ENCODE measurements at regions of chr12 and their contacts with region 1.

Region 1: GRCh38 chr12:103930034-103930786 is at the start of gene HSP90B1:
- DNase-seq: peak; percentile 95
- ATAC-seq: peak; percentile 69
- H3K4me3 Mint-ChIP-seq: peak within 1 kb of the TSS; percentile 89
- H3K27ac Mint-ChIP-seq: peak within 1 kb of the TSS; percentile 97
- H3K4me1 Mint-ChIP-seq: peaks cover 68% of the 10 kb centered on the region
- H3K27me3 Mint-ChIP-seq: no peaks in the 10 kb centered on the region
- CTCF ChIP-seq: no peak
- total RNA-seq, gene HSP90B1: 346 and 368 TPM in 2 replicates

Region 2: DNA sequence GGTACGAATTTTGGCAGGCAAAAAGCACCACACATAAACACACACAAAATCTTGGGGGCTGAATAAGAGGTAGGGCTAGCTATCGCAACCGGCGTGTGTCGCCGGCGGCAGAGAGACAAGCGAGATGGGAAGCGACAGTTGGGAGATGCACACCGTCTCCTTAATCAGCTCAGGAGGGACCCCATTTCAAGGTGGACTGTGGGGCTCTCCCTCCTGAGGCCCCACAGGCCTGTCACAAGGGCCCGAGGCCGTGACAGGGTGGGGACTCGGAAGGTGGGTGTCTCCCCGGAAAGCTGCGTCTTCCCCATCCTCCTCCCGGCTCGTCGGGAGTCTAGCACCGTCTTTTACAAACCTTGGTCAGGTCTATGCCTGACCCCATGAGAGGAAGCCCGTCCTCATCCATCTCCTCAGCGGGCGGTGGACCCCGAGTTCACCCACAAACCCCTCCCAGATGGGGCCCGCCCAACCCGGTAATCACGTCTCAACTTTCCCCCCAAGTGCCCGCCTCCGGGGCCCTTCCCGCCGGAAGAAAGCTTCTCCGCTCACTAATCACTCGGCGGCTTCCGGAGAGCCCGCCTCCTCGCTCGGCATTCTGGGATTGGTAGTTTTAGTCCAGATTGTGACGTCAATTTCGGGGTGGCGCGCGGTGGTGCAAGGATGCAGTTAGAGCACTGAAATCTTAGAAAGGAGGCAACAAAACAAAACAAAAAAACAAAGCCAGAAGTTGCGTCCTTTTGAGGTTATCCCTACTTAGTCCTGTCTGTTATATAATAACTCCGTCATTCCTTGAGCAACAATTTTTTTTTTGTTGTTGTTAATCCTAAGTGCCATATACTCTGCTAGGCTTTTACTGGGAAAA is 1868.4 kb before region 1 on chr12 and contains the start of gene WASHC3:
- CTCF ChIA-PET with region 1: no interaction called
- POLR2A ChIA-PET with region 1: no interaction called
- intact Hi-C with region 1: loop called (anchors 2 kb)
- DNase-seq: peak; percentile 89
- ATAC-seq: peak; percentile 95
- H3K4me3 Mint-ChIP-seq: peak within 1 kb of the TSS; percentile 98
- H3K27ac Mint-ChIP-seq: peak within 1 kb of the TSS; percentile 97
- H3K4me1 Mint-ChIP-seq: peaks cover 21% of the 10 kb centered on the region
- H3K27me3 Mint-ChIP-seq: no peaks in the 10 kb centered on the region
- CTCF ChIP-seq: no peak
- total RNA-seq, gene WASHC3: 47.3 and 50.6 TPM in 2 replicates

Region 3: GRCh38 chr12:103877934-103878510 is 52.2 kb before region 1 on chr12:
- CTCF ChIA-PET with region 1: no interaction called
- POLR2A ChIA-PET with region 1: interaction called, 42 read pairs
- intact Hi-C with region 1: loop called (anchors 1 kb)
- DNase-seq: no peak
- ATAC-seq: peak; percentile 53
- H3K4me3 Mint-ChIP-seq: no peak overlapping the region
- H3K27ac Mint-ChIP-seq: no peak overlapping the region
- H3K4me1 Mint-ChIP-seq: peaks cover 24% of the 10 kb centered on the region
- H3K27me3 Mint-ChIP-seq: no peaks in the 10 kb centered on the region
- CTCF ChIP-seq: peak; percentile 47

Region 4: GRCh38 chr12:103956516-103957027 is 26.4 kb after region 1 on chr12:
- CTCF ChIA-PET with region 1: interaction called, 3 read pairs
- POLR2A ChIA-PET with region 1: interaction called, 78 read pairs
- intact Hi-C with region 1: loop called (anchors 1 kb)
- DNase-seq: no peak
- ATAC-seq: no peak
- H3K4me3 Mint-ChIP-seq: peak overlapping the region; percentile 99
- H3K27ac Mint-ChIP-seq: peak overlapping the region; percentile 97
- H3K4me1 Mint-ChIP-seq: peaks cover 27% of the 10 kb centered on the region
- H3K27me3 Mint-ChIP-seq: no peaks in the 10 kb centered on the region
- CTCF ChIP-seq: no peak

Region 5: DNA sequence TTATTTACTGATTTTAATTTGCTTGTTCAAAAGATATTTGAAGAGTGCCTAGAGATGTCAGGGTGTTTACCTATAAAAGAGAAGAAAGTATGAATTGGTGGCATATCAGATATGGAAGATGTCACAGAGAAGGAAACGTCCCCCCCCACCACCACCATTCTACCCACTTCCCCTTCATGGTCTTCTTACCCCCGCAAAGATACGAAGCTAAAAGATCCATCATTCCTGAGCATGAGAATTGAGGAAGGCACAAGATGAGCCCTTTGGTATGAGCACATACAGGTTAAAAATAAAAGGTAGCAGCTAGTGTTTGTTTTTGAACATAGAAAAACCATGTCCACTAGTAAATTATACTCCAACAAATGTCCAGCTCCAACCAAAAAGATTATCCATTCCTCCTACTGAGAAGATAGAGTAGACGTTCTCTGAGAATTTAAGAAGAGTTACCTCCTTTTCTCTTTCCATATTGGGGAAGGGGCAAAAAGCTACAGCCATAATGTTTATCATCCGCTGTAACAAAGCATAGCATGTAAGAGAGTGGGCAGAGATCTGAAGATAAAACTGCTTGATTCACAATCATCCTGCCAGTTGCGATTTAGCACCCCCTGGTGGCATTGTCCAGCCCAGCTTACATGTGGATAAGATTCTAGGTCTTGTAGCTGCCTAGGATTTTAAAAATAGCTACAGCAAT is 178.7 kb after region 1 on chr12:
- CTCF ChIA-PET with region 1: no interaction called
- POLR2A ChIA-PET with region 1: interaction called, 7 read pairs
- intact Hi-C with region 1: loop called (anchors 2 kb)
- DNase-seq: peak; percentile 58
- ATAC-seq: peak; percentile 94
- H3K4me3 Mint-ChIP-seq: peak overlapping the region; percentile 11
- H3K27ac Mint-ChIP-seq: no peak overlapping the region
- H3K4me1 Mint-ChIP-seq: peaks cover 9% of the 10 kb centered on the region
- H3K27me3 Mint-ChIP-seq: no peaks in the 10 kb centered on the region
- CTCF ChIP-seq: peak; percentile 92